Breast epithelium (tissue), 4 donors: ENCODE measurements at regions of chr17 and their contacts with region 1.

Region 1: DNA sequence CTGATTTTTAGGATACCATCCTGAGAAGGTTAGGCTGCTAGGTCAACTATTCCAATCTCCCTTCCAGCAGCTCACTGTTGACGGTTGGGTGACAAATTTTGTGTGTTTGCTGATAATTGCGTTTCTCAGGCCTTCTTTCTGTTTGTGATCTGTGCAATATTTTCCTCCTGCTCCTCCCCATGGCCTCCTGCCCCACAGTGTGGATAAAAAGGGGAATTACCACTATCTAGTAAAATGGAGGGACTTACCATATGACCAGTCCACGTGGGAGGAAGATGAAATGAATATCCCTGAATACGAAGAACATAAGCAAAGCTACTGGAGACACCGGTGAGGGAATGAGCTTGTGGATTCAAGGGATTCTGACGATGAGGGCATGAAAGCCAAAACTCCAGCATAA is 9.2 kb downstream of the CHD3 start:
- DNase-seq: no peak
- H3K4me3 ChIP-seq: no peak overlapping the region
- H3K27ac ChIP-seq: no peak overlapping the region
- H3K4me1 ChIP-seq: no peaks in the 10 kb centered on the region
- H3K27me3 ChIP-seq: no peaks in the 10 kb centered on the region
- CTCF ChIP-seq: peak in 2 of 3 donors; percentile 44 to 67
- POLR2A ChIP-seq: no peak

Region 2: DNA sequence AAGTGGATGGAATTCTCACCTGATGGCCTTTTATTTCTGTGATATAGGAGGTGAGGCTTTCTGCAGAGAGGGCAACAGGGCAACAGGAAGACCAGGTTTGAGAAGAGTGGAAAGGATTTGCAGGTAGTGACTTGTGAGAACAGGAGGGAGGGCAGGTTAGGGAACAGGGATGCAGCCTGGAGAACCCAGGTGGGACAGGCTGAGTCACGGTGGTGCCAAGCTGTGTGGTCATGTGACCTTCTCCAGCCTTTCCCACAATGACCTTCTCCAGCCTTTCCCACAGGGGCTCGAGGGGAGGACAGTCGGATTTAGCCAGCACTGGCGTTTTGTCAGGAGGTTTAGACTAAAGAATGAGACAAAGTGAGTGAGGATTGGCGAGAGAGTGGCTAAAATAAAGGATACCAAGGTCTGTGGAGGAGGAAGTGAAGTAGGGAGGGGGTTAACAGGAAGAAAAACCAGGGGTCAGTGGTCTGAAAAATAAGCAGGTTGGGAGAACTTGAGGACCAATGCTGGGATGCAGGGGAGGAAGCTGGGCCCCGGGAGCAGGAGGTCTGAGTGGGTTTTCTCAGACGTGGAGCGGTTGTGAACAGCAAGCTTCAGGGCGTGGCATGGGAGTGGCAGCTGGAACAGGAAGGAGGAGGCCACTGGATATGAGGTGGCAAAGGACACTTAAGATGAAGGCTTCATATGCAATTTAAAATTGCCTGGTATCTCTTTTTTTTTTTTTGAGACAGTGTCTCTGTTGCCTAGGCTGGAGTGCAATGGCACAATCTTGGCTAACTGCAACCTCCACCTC is 142.5 kb before region 1 on chr17:
- intact Hi-C with region 1: no loop called
- DNase-seq: no peak
- H3K4me3 ChIP-seq: no peak overlapping the region
- H3K27ac ChIP-seq: no peak overlapping the region
- H3K4me1 ChIP-seq: no peaks in the 10 kb centered on the region
- H3K27me3 ChIP-seq: no peaks in the 10 kb centered on the region
- CTCF ChIP-seq: no peak
- POLR2A ChIP-seq: no peak

Region 3: GRCh38 chr17:7946441-7946840 is 48.7 kb after region 1 on chr17:
- intact Hi-C with region 1: loop called (anchors 1 kb)
- DNase-seq: no peak
- H3K4me3 ChIP-seq: no peak overlapping the region
- H3K27ac ChIP-seq: no peak overlapping the region
- H3K4me1 ChIP-seq: no peaks in the 10 kb centered on the region
- H3K27me3 ChIP-seq: no peaks in the 10 kb centered on the region
- CTCF ChIP-seq: no peak
- POLR2A ChIP-seq: no peak